OCI-LY7 (cell line): ENCODE measurements at regions of chr5 and their contacts with region 1.

Region 1: DNA sequence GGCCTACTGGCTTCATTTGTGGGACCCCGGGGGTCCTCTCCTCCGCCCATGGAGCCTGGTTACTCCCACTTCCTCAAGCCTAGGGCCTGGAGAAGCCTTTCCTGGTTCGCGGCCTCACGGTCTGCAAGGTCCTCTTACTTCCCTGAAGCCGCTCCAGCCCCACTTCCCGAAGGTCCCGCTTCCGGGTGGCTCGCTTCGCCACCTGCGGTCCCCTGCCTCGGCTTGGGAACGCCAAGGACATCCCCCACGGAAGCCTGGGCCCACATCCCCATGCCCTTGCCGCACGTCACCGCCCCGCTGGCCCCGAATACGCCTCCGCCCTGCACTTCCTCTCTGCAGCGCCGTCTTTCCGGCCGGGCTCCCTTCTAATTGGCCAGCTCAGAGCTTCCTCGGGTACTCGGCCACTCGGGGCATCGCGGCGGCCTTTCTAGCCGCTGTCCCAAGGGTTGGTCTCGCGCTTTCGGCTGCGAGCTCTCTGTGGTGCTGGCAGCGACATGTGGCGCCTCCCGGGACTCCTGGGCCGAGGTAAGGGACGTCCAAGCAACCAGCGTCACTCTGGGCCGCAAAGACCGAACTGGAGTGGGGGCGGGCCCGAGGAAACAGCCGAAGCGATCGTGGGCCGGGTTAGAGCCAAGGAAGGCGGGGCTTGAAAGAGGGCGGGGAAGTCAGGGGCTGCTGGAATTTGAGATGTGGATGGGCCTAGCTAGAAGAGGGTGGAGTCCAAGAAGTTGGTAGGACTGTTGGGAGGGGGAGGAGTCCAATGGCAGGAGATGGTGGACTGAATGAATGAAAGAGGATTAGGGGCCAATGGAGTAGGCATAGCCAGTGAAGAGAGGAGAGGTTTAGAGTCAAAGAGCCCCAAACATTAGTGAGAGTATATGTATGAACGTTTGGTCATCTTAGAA is at the start of gene DELE1:
- DNase-seq: peak; percentile 90
- H3K4me3 ChIP-seq: peak within 1 kb of the TSS; percentile 93
- H3K27ac ChIP-seq: peak within 1 kb of the TSS; percentile 69
- H3K4me1 ChIP-seq: peaks cover 12% of the 10 kb centered on the region
- CTCF ChIP-seq: no peak
- total RNA-seq, gene DELE1: 67.9 and 81.2 TPM in 2 replicates

Region 2: DNA sequence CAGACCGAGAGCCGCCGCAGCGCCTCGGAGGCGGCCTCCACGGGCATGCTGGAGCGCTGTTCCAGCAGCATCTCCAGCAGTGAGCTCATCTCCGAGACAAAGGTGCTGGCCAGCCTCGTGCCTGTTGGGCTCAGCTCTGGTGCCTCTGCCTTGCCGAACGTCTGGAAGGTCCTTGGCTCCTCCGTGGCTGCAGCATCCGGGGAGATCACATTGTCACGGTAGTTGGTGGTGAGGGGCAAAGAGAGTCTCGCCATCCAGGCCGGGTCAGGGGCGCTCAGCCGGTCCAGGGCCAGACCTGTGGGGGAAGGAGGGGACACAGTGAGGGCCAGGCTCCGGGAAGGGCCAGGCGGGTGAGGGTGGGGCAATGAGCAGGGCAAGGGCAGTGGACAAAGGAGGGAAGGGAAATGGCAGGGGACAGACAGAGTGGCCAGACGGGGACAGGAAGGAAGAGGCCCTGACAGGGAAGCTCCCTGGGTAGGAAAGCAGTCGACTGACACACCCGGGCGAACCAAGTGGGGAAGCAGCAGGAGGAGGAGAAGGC is 21.9 kb after region 1 on chr5:
- CTCF ChIA-PET with region 1: no interaction called
- POLR2A ChIA-PET with region 1: interaction called, 20 read pairs
- intact Hi-C with region 1: no loop called
- DNase-seq: no peak
- H3K4me3 ChIP-seq: no peak overlapping the region
- H3K27ac ChIP-seq: no peak overlapping the region
- H3K4me1 ChIP-seq: no peaks in the 10 kb centered on the region
- CTCF ChIP-seq: no peak

Region 3: GRCh38 chr5:142108432-142109330 is 185.0 kb after region 1 on chr5 and contains the start of gene NDFIP1:
- CTCF ChIA-PET with region 1: no interaction called
- POLR2A ChIA-PET with region 1: no interaction called
- intact Hi-C with region 1: no loop called
- DNase-seq: peak; percentile 79
- H3K4me3 ChIP-seq: peak within 1 kb of the TSS; percentile 86
- H3K27ac ChIP-seq: peak within 1 kb of the TSS; percentile 66
- H3K4me1 ChIP-seq: peaks cover 15% of the 10 kb centered on the region
- CTCF ChIP-seq: no peak; the same call in none of the 2 replicates
- total RNA-seq, gene NDFIP1: 15.4 and 18.7 TPM in 2 replicates

Region 4: DNA sequence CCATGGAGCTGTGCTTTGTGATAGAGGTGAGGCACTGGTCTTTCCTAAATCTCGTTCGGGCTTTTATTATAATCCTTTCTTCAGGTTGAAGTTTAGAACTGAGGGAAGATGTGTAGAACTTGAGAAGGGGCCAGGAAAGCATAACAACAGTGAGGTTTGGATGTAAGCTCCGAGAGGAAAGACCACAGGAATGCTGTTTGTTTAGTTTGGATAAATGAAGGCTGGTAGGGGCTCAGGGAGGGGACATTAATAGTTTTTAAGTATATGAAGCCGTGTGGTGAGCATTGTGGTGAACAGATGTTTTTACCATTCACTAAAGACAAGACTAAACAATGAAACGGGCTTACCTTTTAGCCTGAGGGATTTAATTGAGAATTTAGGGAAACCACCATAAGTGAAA is 977.2 kb after region 1 on chr5:
- CTCF ChIA-PET with region 1: no interaction called
- POLR2A ChIA-PET with region 1: no interaction called
- intact Hi-C with region 1: no loop called
- DNase-seq: no peak
- H3K4me3 ChIP-seq: no peak overlapping the region
- H3K27ac ChIP-seq: no peak overlapping the region
- H3K4me1 ChIP-seq: no peaks in the 10 kb centered on the region
- CTCF ChIP-seq: no peak